Caco-2 (cell line): ENCODE measurements at regions of chr10 and their contacts with region 1.

Region 1: DNA sequence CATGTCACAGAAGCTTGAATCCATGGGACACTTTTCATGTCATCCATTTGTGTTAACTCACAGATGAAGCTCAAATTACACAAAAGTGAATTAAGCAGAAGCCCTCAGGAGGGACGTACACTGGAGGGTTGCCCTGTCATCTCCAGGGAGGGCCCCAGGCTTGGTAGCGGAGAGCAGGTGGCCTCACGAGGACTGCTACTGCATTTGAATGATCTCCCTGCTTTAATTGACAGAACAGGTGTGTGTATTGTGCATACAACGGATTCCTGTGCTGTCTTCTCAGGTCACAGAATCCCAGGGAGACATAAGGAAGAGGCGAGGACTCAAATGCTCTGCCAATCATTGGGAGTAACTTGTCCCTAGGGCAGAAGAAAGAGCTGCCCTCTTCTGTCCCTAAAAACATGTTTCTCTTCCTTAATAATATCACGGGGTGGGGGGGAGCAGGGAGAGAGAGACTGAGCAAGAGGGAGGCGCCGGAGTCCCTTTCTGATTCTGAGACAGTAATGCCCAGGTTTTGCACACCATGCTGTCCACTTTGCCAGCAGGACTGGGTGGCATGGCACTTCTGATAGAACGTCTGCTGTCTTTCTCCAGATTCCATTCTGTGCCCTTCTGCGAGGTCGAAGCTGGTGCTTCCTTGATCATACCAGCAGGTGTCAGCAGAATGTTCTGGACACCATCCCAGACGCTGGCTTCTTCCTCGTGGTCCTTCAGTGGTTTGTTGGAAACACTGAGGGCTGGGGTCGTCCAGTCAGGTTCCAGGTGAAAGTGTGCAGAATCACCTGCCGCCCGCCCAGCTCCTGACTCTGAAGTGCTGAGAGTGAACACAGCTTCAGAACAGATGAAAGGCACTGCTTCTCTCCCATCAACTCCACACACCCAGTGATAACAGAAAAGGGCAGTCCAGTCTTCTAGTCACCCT is 26.2 kb upstream of the RASGEF1A start:
- DNase-seq: peak; percentile 77
- H3K4me3 ChIP-seq: no peak overlapping the region
- H3K4me3 Mint-ChIP-seq: peak overlapping the region; percentile 14
- H3K27ac Mint-ChIP-seq: no peak overlapping the region
- H3K4me1 ChIP-seq: 0 out of 2 replicates have a peak, but pooled peaks cover 4% of the 10 kb centered on the region
- H3K4me1 Mint-ChIP-seq: no peaks in the 10 kb centered on the region
- H3K27me3 ChIP-seq: no peaks in the 10 kb centered on the region
- H3K27me3 Mint-ChIP-seq: peaks cover 5% of the 10 kb centered on the region
- CTCF ChIP-seq: peak; percentile 87 to 97

Region 2: GRCh38 chr10:43316988-43317387 is 24.0 kb after region 1 on chr10:
- CTCF ChIA-PET with region 1: interaction called, 5 read pairs
- POLR2A ChIA-PET with region 1: no interaction called
- intact Hi-C with region 1: loop called (anchors 1 kb)
- DNase-seq: peak; percentile 50 to 61
- H3K4me3 ChIP-seq: no peak overlapping the region
- H3K4me3 Mint-ChIP-seq: no peak overlapping the region
- H3K27ac Mint-ChIP-seq: peak overlapping the region; percentile 55
- H3K4me1 ChIP-seq: peaks cover 8% of the 10 kb centered on the region
- H3K4me1 Mint-ChIP-seq: peaks cover 13% of the 10 kb centered on the region
- H3K27me3 ChIP-seq: no peaks in the 10 kb centered on the region
- H3K27me3 Mint-ChIP-seq: no peaks in the 10 kb centered on the region
- CTCF ChIP-seq: peak; percentile 16 to 33